Caco-2 (cell line): ENCODE measurements at regions of chr11 and their contacts with region 1.

Region 1: DNA sequence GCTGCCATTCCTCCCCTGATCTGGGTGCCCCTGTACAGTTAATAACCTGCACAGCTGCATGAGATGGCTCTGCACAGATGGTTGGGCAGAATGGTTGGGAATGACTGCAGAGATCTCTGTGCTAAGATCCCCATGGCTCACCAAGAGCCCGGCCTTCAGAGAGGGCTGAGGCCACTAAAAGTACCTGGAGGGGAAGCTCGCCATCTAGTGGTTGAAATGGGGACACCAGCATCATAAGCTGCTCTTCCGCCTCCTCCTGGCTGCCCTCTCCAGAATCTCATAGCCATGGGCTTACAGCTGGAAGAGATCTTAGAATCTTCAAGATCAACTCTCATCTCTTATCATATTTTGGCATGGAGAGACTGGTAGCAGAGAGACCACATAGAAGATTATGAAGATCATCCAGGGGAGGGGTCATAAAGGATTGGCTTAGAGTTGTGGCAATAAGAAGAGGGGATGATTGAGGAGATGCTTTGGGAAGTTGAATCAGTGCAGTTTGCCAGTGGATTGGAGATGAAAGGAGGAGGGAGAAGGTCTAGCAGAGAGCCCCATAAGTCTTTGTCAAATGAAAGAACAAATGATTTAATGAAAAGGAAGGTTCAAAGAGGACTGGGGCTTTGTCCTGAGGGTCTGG is 22.0 kb upstream of the TLCD5 start:
- DNase-seq: peak; percentile 81 to 86
- H3K4me3 ChIP-seq: no peak overlapping the region
- H3K4me3 Mint-ChIP-seq: no peak overlapping the region
- H3K27ac Mint-ChIP-seq: no peak overlapping the region
- H3K4me1 ChIP-seq: no peaks in the 10 kb centered on the region
- H3K4me1 Mint-ChIP-seq: peaks cover 8% of the 10 kb centered on the region
- H3K27me3 ChIP-seq: no peaks in the 10 kb centered on the region
- H3K27me3 Mint-ChIP-seq: peaks cover 3% of the 10 kb centered on the region
- CTCF ChIP-seq: peak; percentile 97 to 100

Region 2: DNA sequence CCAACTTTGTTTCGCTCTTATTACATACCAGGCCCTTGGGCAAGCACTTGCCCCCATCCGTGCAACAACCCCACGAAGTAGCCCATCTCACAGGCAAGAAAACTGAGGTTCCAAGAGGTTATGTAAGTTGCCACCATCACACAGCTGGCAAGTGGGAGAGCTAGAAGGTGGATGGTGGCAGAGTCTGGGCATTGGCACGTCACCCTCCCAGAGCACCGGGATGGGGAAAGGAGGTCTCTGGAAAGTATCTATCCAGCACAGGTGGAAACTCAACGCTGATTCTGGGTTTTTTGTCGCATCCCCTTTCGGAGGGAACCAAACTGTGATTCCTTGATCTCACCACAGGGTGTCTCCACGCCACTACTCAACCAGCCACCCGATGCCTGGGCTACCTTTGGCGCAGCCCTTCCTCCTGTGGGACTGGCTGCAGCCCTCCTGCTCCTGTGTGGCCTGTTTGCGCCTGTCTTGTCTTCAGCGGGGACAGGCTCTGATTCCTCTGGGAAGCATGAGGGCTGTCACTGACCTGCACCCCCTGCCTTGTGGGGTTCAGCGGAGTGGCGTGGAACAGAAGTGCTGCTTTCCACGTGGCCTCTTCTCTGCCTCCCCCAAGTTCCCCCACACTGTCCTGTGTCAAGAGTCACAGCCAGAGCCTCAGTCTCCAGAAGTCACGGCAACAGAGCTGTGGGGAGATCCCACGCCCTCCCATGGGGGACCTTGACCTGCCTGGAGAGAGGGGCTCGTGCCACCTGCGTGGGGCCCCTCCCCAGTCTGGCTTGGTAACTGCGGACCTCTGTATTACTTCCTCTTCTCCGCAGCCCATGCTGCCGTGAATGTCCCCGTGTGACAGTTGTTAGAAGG is 130.8 kb before region 1 on chr11:
- CTCF ChIA-PET with region 1: interaction called, 14 read pairs
- POLR2A ChIA-PET with region 1: no interaction called
- intact Hi-C with region 1: loop called (anchors 1 kb)
- DNase-seq: peak; percentile 87 to 88
- H3K4me3 ChIP-seq: no peak overlapping the region
- H3K4me3 Mint-ChIP-seq: no peak overlapping the region
- H3K27ac Mint-ChIP-seq: no peak overlapping the region
- H3K4me1 ChIP-seq: peaks cover 8% of the 10 kb centered on the region
- H3K4me1 Mint-ChIP-seq: no peaks in the 10 kb centered on the region
- H3K27me3 ChIP-seq: no peaks in the 10 kb centered on the region
- H3K27me3 Mint-ChIP-seq: peaks cover 9% of the 10 kb centered on the region
- CTCF ChIP-seq: peak; percentile 95 to 98

Region 3: GRCh38 chr11:120235024-120235861 is 67.9 kb before region 1 on chr11:
- CTCF ChIA-PET with region 1: interaction called, 246 read pairs
- POLR2A ChIA-PET with region 1: interaction called, 5 read pairs
- intact Hi-C with region 1: loop called (anchors 1 kb)
- DNase-seq: peak; percentile 89 to 93
- H3K4me3 ChIP-seq: no peak overlapping the region
- H3K4me3 Mint-ChIP-seq: no peak overlapping the region
- H3K27ac Mint-ChIP-seq: no peak overlapping the region
- H3K4me1 ChIP-seq: peaks cover 4% of the 10 kb centered on the region
- H3K4me1 Mint-ChIP-seq: no peaks in the 10 kb centered on the region
- H3K27me3 ChIP-seq: peaks cover 5% of the 10 kb centered on the region
- H3K27me3 Mint-ChIP-seq: peaks cover 13% of the 10 kb centered on the region
- CTCF ChIP-seq: peak; percentile 97 to 99

Region 4: GRCh38 chr11:120248551-120249278 is 54.4 kb before region 1 on chr11:
- CTCF ChIA-PET with region 1: interaction called, 15 read pairs
- POLR2A ChIA-PET with region 1: no interaction called
- intact Hi-C with region 1: no loop called
- DNase-seq: no peak
- H3K4me3 ChIP-seq: no peak overlapping the region
- H3K4me3 Mint-ChIP-seq: no peak overlapping the region
- H3K27ac Mint-ChIP-seq: no peak overlapping the region
- H3K4me1 ChIP-seq: no peaks in the 10 kb centered on the region
- H3K4me1 Mint-ChIP-seq: no peaks in the 10 kb centered on the region
- H3K27me3 ChIP-seq: peaks cover 8% of the 10 kb centered on the region
- H3K27me3 Mint-ChIP-seq: peaks cover 42% of the 10 kb centered on the region
- CTCF ChIP-seq: no peak

Region 5: DNA sequence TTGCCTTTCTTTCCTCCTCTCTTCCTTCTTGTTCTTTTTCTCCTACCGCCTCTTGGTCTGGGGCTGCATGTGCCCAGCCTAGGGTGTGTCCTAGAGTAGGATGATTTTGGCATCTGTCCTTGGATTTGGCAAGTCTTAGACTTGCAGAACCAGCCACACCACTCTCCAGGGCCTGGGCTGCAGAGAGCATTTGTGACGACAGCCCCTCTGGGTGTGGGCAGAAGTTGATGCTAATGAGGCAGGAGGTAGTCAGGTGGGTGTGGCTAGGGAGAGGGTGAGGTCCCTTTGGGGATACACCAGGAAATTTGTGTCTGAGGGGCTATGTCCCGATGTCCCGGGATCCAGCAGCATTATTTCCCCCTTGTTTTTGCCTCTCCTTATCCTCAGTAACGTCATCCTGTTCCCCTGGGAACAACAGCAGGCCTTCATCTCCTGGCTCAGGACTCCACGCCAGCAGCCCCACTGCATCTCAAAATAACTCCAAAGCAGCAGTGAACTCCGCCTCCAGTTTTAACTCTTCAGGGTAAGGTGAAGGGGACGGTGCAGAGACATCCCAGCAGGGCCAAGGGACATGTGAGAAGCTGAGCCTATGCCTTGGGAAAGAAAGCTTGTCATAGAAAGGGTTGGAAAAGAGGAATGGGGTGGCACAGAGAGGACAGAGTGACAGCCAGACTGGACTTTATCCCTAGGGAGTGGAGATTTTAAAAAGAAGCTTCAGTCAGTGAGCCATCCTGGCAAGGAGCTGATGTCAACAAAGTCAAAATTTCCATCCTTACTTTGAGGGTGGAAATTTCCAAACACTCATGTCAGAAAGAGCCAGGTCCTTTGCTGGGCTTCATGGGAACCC is 13.9 kb after region 1 on chr11:
- CTCF ChIA-PET with region 1: interaction called, 20 read pairs
- POLR2A ChIA-PET with region 1: no interaction called
- intact Hi-C with region 1: no loop called
- DNase-seq: peak; percentile 36 to 67
- H3K4me3 ChIP-seq: no peak overlapping the region
- H3K4me3 Mint-ChIP-seq: peak overlapping the region; percentile 9
- H3K27ac Mint-ChIP-seq: no peak overlapping the region
- H3K4me1 ChIP-seq: peaks cover 24% of the 10 kb centered on the region
- H3K4me1 Mint-ChIP-seq: peaks cover 16% of the 10 kb centered on the region
- H3K27me3 ChIP-seq: no peaks in the 10 kb centered on the region
- H3K27me3 Mint-ChIP-seq: no peaks in the 10 kb centered on the region
- CTCF ChIP-seq: no peak

Region 6: DNA sequence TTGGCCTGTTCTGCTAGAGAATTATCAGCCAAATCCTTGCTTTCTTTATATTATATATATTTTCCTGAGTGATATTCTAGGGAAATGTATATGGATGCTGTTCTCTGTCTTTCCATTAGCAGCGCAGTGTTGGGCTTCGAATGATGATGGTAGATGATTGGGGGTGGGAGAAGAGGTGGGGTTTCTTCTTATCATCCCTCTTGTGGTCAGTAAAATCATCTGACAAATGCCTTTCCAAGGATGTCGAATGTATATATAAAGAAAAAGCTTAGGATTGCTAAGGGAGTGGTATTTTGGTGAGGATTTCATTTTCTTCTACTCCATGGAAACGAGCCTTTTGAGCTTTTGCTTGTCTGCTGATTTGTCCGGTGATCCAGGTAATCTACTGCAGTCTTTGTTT is 82.0 kb after region 1 on chr11:
- CTCF ChIA-PET with region 1: no interaction called
- POLR2A ChIA-PET with region 1: no interaction called
- intact Hi-C with region 1: no loop called
- DNase-seq: no peak
- H3K4me3 ChIP-seq: no peak overlapping the region
- H3K4me3 Mint-ChIP-seq: no peak overlapping the region
- H3K27ac Mint-ChIP-seq: no peak overlapping the region
- H3K4me1 ChIP-seq: peaks cover 13% of the 10 kb centered on the region
- H3K4me1 Mint-ChIP-seq: peaks cover 24% of the 10 kb centered on the region
- H3K27me3 ChIP-seq: no peaks in the 10 kb centered on the region
- H3K27me3 Mint-ChIP-seq: no peaks in the 10 kb centered on the region
- CTCF ChIP-seq: no peak

Region 7: DNA sequence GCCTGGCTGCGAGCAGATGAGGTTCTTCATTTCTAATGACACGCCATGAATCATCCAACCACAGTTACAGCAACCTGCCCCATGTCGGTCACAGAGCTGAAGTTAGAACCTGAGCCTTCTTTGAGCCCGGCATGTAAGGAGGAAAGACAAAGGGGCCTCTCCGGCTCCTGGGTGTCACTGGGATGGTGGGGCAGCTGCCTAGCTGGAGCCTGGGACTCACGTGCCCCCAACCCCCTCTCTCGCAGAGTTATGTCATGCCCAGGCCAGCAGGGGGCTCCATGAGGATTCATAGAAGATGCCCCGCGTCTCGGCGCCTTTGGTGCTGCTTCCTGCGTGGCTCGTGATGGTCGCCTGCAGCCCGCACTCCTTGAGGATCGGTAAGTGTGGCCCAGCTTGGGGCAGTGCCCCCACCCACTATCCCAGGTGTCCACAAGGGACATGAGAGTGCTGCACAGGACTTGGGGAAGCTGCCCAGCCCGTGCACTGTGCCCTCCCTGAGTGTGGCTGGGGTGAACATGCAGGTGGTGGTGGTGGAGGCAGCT is 357.0 kb after region 1 on chr11:
- CTCF ChIA-PET with region 1: no interaction called
- POLR2A ChIA-PET with region 1: no interaction called
- intact Hi-C with region 1: no loop called
- DNase-seq: peak; percentile 55 to 63
- H3K4me3 ChIP-seq: no peak overlapping the region
- H3K4me3 Mint-ChIP-seq: no peak overlapping the region
- H3K27ac Mint-ChIP-seq: no peak overlapping the region
- H3K4me1 ChIP-seq: no peaks in the 10 kb centered on the region
- H3K4me1 Mint-ChIP-seq: no peaks in the 10 kb centered on the region
- H3K27me3 ChIP-seq: no peaks in the 10 kb centered on the region
- H3K27me3 Mint-ChIP-seq: peaks cover 5% of the 10 kb centered on the region
- CTCF ChIP-seq: peak; percentile 53 to 66